Endothelial cell of umbilical vein (primary cell): ENCODE measurements at regions of chrX and their contacts with region 1.

Region 1: GRCh38 chrX:150365051-150365989 is 2.2 kb downstream of the MAMLD1 start:
- DNase-seq: peak; percentile 62
- H3K4me3 ChIP-seq: peak overlapping the region; percentile 46 to 78 (median 66)
- H3K27ac ChIP-seq: peak overlapping the region; percentile 58
- H3K4me1 ChIP-seq: peaks cover 13% of the 10 kb centered on the region
- H3K27me3 ChIP-seq: peaks cover 15% of the 10 kb centered on the region in 2 experiments
- CTCF ChIP-seq: peak; percentile 53 to 71
- POLR2A ChIP-seq: no peak

Region 2: DNA sequence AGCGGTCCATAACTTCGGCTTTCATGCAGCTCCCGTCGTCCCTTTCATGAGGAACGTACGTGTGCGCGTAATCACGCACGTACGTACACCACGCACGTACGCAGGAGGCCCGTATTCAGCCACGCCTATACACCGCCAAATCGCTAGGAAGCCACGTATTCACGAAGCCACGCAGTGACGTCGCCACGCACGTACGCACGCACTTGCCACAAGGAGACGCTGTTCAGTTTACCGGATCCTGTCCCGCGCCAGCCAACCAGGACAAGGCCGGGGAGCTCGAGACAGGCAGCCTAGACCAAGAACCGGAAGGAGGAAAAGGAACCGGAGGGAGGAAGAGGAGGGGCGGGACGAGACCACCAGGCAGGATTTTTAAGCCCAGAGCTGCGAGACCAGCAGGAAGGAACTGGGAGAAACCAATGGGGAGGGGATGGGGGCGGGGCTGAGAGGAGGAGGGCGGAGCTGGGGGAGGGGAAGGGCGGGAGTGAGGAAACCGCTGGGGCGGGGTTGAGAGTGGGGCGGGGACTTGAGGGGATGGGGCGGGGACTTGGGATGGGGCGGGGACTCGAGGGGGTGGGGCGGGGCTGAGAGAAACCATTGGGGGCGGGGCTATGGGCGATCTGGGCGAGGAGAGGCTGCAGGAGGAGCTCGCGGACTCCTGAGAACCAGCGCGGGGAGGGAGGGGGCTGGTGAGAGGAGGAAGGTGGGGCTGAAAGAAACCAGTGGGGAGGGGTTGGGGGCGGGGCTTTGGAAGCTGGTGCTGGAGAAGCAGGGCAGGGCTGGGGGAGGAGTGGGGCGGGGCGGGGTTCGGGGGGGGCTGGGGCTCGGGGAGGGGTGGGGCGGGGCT is 426.7 kb before region 1 on chrX and contains the start of gene EOLA2:
- CTCF ChIA-PET with region 1: interaction called, 24 read pairs
- POLR2A ChIA-PET with region 1: interaction called, 5 read pairs
- dilution Hi-C with region 1: no loop called
- intact Hi-C with region 1: no loop called
- DNase-seq: peak; percentile 99
- H3K4me3 ChIP-seq: peak within 1 kb of the TSS; percentile 7 to 71 (median 29)
- H3K27ac ChIP-seq: peak within 1 kb of the TSS; percentile 36
- H3K4me1 ChIP-seq: peaks cover 2% of the 10 kb centered on the region
- H3K27me3 ChIP-seq: no peaks in the 10 kb centered on the region
- CTCF ChIP-seq: peak; percentile 63 to 65
- POLR2A ChIP-seq: peak; percentile 34
- total RNA-seq, gene EOLA2: 24.3 and 35.5 TPM in 2 replicates

Region 3: GRCh38 chrX:150032741-150033140 is 332.6 kb before region 1 on chrX:
- CTCF ChIA-PET with region 1: no interaction called
- POLR2A ChIA-PET with region 1: no interaction called
- dilution Hi-C with region 1: no loop called
- intact Hi-C with region 1: loop called (anchors 10 kb)
- DNase-seq: peak; percentile 40
- H3K4me3 ChIP-seq: no peak overlapping the region
- H3K27ac ChIP-seq: no peak overlapping the region
- H3K4me1 ChIP-seq: peaks cover 34% of the 10 kb centered on the region
- H3K27me3 ChIP-seq: no peaks in the 10 kb centered on the region
- CTCF ChIP-seq: no peak
- POLR2A ChIP-seq: no peak

Region 4: GRCh38 chrX:150200820-150201287 is 164.5 kb before region 1 on chrX:
- CTCF ChIA-PET with region 1: interaction called, 15 read pairs
- POLR2A ChIA-PET with region 1: no interaction called
- dilution Hi-C with region 1: no loop called
- intact Hi-C with region 1: loop called (anchors 1 kb)
- DNase-seq: peak; percentile 73
- H3K4me3 ChIP-seq: no peak overlapping the region
- H3K27ac ChIP-seq: no peak overlapping the region
- H3K4me1 ChIP-seq: peaks cover 11% of the 10 kb centered on the region
- H3K27me3 ChIP-seq: no peaks in the 10 kb centered on the region
- CTCF ChIP-seq: no peak
- POLR2A ChIP-seq: no peak

Region 5: GRCh38 chrX:150486011-150486410 is 120.7 kb after region 1 on chrX:
- CTCF ChIA-PET with region 1: interaction called, 24 read pairs
- POLR2A ChIA-PET with region 1: no interaction called
- dilution Hi-C with region 1: no loop called
- intact Hi-C with region 1: loop called (anchors 1 kb)
- DNase-seq: peak; percentile 44
- H3K4me3 ChIP-seq: no peak overlapping the region
- H3K27ac ChIP-seq: no peak overlapping the region
- H3K4me1 ChIP-seq: no peaks in the 10 kb centered on the region
- H3K27me3 ChIP-seq: no peaks in the 10 kb centered on the region
- CTCF ChIP-seq: peak; percentile 59 to 70
- POLR2A ChIP-seq: no peak

Region 6: DNA sequence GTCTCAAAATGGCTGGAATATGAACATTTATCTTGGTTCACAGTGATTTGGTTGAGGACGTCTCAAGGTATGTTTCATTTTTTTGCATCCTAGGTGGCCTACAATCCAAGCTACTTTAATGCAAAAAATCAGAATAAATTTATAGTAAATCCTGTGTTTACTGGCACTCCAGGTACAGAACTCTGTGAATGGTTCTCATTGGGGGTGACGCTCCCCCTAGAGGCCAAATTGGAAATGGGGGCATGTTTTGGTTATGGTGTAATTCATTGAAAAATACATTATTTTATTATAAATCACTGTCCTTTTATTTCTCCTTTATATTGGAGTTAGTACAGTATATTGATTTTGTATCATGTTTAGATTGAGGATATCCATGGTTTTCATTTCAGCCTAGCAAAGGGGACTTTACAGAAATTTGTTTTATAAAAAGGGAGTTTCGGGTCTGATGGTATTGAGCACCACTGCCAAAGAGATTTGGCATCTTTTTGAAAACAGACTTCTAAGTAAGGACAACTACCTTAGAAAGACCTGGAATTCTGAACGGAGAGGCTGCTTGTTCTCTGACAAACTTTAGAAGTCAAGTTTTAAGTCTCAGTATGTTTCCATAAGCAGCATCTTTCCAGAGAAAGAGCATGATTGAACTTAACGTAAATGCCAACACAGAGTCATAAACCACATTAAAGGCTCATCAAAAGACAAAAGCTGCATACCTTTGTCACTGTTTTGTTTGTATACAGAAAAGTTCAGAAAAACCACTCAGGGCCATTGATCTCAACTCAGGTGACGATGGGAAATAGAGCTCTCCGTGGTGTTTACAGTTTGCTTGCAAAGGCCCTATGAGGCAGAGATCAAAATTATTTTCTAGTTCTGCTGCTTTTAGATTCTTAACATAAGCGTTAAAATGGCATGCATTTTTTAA is 222.5 kb after region 1 on chrX:
- CTCF ChIA-PET with region 1: interaction called, 22 read pairs
- POLR2A ChIA-PET with region 1: no interaction called
- dilution Hi-C with region 1: no loop called
- intact Hi-C with region 1: loop called (anchors 1 kb)
- DNase-seq: peak; percentile 35
- H3K4me3 ChIP-seq: no peak overlapping the region
- H3K27ac ChIP-seq: no peak overlapping the region
- H3K4me1 ChIP-seq: no peaks in the 10 kb centered on the region
- H3K27me3 ChIP-seq: no peaks in the 10 kb centered on the region
- CTCF ChIP-seq: peak; percentile 40 to 51
- POLR2A ChIP-seq: no peak

Region 7: GRCh38 chrX:150715184-150715583 is 349.9 kb after region 1 on chrX:
- CTCF ChIA-PET with region 1: no interaction called
- POLR2A ChIA-PET with region 1: no interaction called
- dilution Hi-C with region 1: no loop called
- intact Hi-C with region 1: loop called (anchors 2 kb)
- DNase-seq: peak; percentile 16
- H3K4me3 ChIP-seq: no peak overlapping the region
- H3K27ac ChIP-seq: peak overlapping the region; percentile 18
- H3K4me1 ChIP-seq: peaks cover 3% of the 10 kb centered on the region
- H3K27me3 ChIP-seq: no peaks in the 10 kb centered on the region
- CTCF ChIP-seq: no peak
- POLR2A ChIP-seq: no peak